ENCODE measurements at regions of chr7 and their contacts with region 1.

Region 1: DNA sequence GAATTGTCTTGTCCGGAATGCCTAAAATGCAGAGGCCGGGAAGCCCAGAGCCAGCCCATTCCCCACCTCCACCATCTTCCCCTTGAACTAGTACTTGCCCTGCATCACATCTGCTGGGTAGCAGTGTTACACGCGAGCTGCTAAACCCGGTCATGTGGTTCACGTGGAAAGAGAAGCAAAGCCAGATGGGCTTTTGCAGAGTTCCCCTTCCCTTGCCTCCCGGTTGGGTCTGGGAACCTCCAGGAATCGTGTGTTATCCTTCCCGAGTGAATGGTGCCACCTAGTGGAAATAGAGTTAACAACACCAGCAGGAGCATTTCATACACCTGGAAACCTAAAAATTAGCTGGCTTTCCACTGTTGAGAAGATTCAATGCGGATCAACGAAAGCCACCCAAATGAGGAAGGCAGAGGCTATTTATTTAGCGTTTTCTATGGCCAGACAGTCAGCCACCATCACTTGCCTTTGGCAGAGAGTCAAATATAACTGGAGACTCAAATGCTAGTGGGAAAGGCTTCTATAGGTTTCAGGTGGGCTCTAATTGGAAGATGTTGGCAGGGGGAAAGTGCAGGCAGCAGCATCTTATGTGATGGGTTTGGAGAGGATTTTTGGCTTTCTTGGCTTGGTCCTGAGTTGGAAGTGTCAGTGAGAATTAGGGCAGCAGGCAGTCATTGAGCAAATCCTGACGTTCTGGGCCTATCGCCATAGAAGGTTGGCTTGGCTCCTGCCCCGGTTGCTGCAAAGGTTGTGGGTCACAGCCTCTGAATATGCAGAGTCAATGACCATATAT is 12.9 kb upstream of the DENND2A start:
- DNase-seq: peak; percentile 90

Region 2: GRCh38 chr7:140512317-140513000 is 141.1 kb before region 1 on chr7:
- CTCF ChIA-PET with region 1: interaction called, 32 read pairs
- POLR2A ChIA-PET with region 1: no interaction called
- DNase-seq: peak; percentile 61

Region 3: DNA sequence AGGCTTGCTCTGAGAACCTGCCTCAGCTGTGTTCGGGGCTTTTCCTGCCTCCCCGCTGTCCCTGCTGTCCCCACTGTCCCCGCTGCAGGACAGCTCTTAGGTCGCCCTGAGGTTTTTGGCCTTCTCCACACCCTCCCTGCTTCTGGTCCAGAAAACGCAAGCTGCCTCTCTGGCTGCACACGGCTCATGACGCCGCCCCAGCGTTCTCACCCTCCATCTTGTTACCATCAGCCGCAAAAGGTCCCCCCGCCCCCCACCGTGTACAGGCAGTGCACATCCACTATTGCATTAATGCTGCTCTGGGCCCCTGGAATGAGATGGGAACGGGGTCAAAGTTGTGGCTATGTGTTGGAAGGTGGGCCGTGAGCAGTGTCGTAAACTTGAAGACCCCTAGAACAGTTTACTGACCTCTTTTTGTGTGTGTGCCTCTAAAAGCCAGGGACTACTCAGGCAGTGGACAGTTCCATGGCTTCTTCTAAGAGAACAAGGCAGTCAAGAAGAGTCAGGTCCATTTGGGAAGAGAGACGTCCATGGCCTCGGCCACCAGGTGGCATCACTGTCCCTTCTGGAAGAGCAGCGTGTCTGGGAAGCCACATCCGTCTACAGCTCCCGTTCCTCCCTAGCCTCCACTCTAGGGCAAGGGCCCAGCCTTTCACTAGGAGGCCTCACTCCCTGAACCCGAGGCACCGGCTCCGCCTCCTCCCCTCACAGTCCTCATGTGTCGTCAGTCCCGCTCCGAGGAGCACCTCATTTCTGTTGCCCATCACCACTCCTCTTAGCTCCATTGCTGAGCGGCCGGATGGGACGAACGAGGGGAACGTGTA is 135.8 kb before region 1 on chr7:
- CTCF ChIA-PET with region 1: interaction called, 32 read pairs
- POLR2A ChIA-PET with region 1: interaction called, 3 read pairs
- DNase-seq: peak; percentile 97

Region 4: DNA sequence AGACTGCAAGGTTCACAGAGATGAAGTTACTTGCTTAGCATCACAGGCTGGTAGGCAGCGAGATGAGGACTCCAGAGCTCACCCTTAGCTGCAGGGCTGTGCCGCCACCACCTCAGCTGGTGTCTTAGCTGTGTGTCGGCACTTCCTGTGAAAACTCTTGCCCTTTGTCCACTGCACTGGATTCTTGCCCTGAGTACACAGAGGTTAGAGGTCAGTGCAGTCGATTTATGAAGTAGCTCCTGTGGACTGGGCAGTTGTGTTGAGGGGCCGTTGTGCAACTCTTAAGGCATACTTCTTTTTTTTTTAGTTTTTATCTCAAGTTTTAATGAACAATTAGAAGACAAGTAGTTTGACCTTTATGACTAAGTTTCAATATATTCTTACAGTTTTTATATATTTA is 53.6 kb after region 1 on chr7:
- CTCF ChIA-PET with region 1: no interaction called
- POLR2A ChIA-PET with region 1: no interaction called
- DNase-seq: no peak

Region 5: GRCh38 chr7:140810830-140811556 is 157.5 kb after region 1 on chr7:
- CTCF ChIA-PET with region 1: no interaction called
- POLR2A ChIA-PET with region 1: no interaction called
- DNase-seq: peak; percentile 69

Measured in HEK293T (cell line).